Activated B cell treated with CpG ODN at 0.5 μM for 24 hours (primary cell): ENCODE measurements at regions of chr1 and their contacts with region 1.

Region 1: GRCh38 chr1:234610348-234611152 is 572 bp upstream of the IRF2BP2 start:
- DNase-seq: peak; percentile 84
- ATAC-seq: peak; percentile 45
- H3K4me3 Mint-ChIP-seq: peak overlapping the region; percentile 90
- H3K27ac Mint-ChIP-seq: peak overlapping the region; percentile 95
- H3K4me1 Mint-ChIP-seq: peaks cover 56% of the 10 kb centered on the region
- H3K27me3 Mint-ChIP-seq: no peaks in the 10 kb centered on the region
- CTCF ChIP-seq: no peak

Region 2: DNA sequence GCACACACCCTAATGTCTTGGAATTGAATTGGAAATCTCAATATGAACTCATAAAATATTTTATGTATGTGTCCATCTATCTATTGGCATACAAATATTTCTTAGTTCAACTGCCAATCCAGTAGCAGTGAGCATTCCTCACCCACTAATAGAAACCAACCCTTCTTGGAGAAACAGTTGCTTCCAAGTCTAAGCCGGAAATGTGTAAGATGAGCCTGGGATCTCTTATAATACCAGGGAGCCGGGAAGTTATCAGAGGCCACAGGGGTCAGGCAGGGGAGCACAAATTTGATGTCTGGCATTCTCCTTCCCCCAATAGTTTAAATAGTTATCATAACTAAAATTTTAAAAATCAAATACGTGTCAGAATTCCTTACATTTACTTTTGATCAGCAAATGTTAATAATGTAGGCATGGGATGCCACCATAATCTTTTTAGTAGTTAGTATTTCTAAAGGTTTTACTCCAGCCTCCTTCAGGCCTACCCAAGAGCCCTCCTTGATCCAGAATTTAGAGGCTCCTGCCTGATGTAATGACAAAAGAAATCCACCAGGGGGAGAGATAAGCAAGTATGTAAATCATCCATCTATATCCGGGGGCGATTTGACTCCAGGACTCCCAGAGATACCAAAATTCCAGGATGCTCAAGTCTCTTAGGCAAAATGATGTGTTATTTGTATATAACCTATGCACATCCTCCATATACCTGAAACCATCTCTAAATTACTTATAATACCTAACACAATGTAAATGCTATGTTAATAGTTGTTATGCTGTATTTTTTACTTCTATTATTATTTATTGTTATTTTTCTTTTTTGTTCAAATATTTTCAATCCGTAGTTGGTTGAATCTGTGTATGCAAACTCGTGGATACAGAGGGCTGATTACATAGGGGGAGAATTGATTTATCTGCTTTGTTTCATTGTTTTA is 456.0 kb before region 1 on chr1:
- CTCF ChIA-PET with region 1: no interaction called
- POLR2A ChIA-PET with region 1: no interaction called
- intact Hi-C with region 1: no loop called
- DNase-seq: no peak
- ATAC-seq: no peak
- H3K4me3 Mint-ChIP-seq: no peak overlapping the region
- H3K27ac Mint-ChIP-seq: no peak overlapping the region
- H3K4me1 Mint-ChIP-seq: no peaks in the 10 kb centered on the region
- H3K27me3 Mint-ChIP-seq: peaks cover 2% of the 10 kb centered on the region
- CTCF ChIP-seq: no peak

Region 3: GRCh38 chr1:234533975-234534876 is 76.3 kb before region 1 on chr1:
- CTCF ChIA-PET with region 1: no interaction called
- POLR2A ChIA-PET with region 1: no interaction called
- intact Hi-C with region 1: no loop called
- DNase-seq: no peak
- ATAC-seq: no peak
- H3K4me3 Mint-ChIP-seq: no peak overlapping the region
- H3K27ac Mint-ChIP-seq: no peak overlapping the region
- H3K4me1 Mint-ChIP-seq: peaks cover 6% of the 10 kb centered on the region
- H3K27me3 Mint-ChIP-seq: peaks cover under 1% of the 10 kb centered on the region
- CTCF ChIP-seq: no peak

Region 4: DNA sequence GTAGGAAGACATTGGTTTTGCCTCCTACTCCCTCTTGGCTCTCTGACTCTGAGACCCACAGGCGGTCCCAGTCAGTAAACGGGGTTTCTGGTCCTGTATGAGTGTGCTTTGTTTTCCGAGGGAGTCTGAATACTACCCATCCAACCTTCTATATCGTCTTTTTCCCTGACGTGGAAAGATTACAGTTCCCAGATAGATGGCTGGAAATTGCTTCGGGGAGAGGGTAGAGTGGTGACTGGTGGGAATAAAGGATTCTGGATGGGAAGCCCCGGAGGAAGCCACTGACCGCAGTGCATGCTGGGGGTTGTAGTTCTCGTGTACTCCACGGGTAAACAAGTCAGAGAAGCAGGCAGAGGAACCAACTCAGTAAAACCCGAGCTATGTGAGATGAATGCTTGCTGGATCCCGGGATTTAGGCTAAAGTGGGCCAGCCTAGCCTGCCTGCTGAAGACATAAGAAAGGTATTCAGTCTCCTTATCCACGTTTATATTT is 65.6 kb after region 1 on chr1:
- CTCF ChIA-PET with region 1: no interaction called
- POLR2A ChIA-PET with region 1: interaction called, 4 read pairs
- intact Hi-C with region 1: loop called (anchors 2 kb)
- DNase-seq: peak; percentile 41
- ATAC-seq: peak; percentile 92
- H3K4me3 Mint-ChIP-seq: peak overlapping the region; percentile 87
- H3K27ac Mint-ChIP-seq: peak overlapping the region; percentile 54
- H3K4me1 Mint-ChIP-seq: peaks cover 14% of the 10 kb centered on the region
- H3K27me3 Mint-ChIP-seq: no peaks in the 10 kb centered on the region
- CTCF ChIP-seq: no peak

Region 5: GRCh38 chr1:234842726-234843641 is 232.4 kb after region 1 on chr1:
- CTCF ChIA-PET with region 1: no interaction called
- POLR2A ChIA-PET with region 1: interaction called, 42 read pairs
- intact Hi-C with region 1: loop called (anchors 2 kb)
- DNase-seq: peak; percentile 40
- ATAC-seq: peak; percentile 76
- H3K4me3 Mint-ChIP-seq: peak overlapping the region; percentile 62
- H3K27ac Mint-ChIP-seq: peak overlapping the region; percentile 71
- H3K4me1 Mint-ChIP-seq: peaks cover 52% of the 10 kb centered on the region
- H3K27me3 Mint-ChIP-seq: no peaks in the 10 kb centered on the region
- CTCF ChIP-seq: no peak

Region 6: DNA sequence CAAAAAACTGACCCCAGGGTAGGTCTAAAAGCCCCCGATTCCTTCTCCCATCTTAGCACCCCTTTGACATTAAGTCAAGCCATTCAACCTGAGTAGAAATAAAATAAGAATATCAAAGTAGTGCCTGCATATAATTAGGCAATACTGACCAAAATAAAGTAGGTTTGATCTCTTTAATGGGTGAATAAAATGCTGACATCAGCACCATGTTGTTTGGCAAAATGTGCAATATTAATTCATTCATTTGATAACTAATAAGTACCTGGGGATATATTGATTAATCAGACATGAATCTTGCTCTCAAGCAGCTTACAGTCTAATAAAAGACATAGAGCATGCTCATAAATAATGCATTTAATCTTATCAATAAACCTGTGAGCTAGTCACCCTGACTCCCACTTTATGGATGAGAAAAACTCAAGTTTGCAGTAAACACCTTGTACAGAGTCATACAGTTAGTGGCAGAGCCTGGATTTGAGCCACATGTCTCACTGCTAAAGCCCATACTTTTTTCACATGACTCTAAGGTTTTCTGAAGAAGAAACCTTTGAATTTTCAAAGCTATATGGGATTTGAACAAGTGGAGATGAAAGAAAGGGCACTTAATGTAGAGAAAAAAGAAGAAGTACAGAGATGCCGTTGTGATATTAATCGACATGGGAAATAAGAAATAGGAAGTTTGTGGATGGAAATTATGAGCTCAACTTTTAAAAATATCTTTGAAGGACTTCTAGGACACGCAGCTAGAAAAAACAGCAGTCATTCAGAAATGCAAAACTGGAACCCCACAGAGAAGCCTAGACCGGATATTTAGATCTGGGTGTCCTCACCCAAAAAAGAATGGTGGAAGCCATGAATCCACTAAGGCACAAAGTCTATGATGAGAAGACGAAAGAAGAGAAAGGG is 334.1 kb after region 1 on chr1:
- CTCF ChIA-PET with region 1: no interaction called
- POLR2A ChIA-PET with region 1: interaction called, 17 read pairs
- intact Hi-C with region 1: no loop called
- DNase-seq: no peak
- ATAC-seq: peak; percentile 50
- H3K4me3 Mint-ChIP-seq: peak overlapping the region; percentile 58
- H3K27ac Mint-ChIP-seq: peak overlapping the region; percentile 81
- H3K4me1 Mint-ChIP-seq: peaks cover 39% of the 10 kb centered on the region
- H3K27me3 Mint-ChIP-seq: no peaks in the 10 kb centered on the region
- CTCF ChIP-seq: no peak

Region 7: DNA sequence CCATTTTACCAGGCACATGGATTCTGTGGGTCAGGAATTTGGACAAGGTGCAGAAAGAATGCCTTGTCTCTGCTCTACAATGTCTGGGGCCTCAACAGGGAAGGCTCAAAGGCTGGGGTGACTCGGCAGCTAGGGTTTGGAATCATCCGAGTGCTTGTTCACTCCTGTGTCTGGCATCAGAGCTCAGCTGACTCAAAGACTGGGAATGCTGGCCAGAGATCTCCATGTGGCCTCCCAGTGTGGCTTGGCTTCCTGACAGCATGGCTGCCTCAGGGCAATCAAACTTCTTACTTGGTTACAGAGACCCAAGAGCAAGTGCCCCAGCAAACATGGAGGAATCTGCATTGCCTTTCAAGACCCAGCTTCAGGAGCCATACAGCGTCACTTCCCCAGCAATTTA is 407.6 kb after region 1 on chr1:
- CTCF ChIA-PET with region 1: interaction called, 3 read pairs
- POLR2A ChIA-PET with region 1: interaction called, 142 read pairs
- intact Hi-C with region 1: no loop called
- DNase-seq: no peak
- ATAC-seq: no peak
- H3K4me3 Mint-ChIP-seq: no peak overlapping the region
- H3K27ac Mint-ChIP-seq: peak overlapping the region; percentile 68
- H3K4me1 Mint-ChIP-seq: peaks cover 72% of the 10 kb centered on the region
- H3K27me3 Mint-ChIP-seq: no peaks in the 10 kb centered on the region
- CTCF ChIP-seq: no peak

Region 8: GRCh38 chr1:235030919-235031596 is 420.5 kb after region 1 on chr1:
- CTCF ChIA-PET with region 1: no interaction called
- POLR2A ChIA-PET with region 1: no interaction called
- intact Hi-C with region 1: no loop called
- DNase-seq: no peak
- ATAC-seq: no peak
- H3K4me3 Mint-ChIP-seq: no peak overlapping the region
- H3K27ac Mint-ChIP-seq: no peak overlapping the region
- H3K4me1 Mint-ChIP-seq: peaks cover 16% of the 10 kb centered on the region
- H3K27me3 Mint-ChIP-seq: no peaks in the 10 kb centered on the region
- CTCF ChIP-seq: no peak

Region 9: GRCh38 chr1:235160957-235161684 is 550.6 kb after region 1 on chr1 and contains the start of gene RBM34:
- CTCF ChIA-PET with region 1: no interaction called
- POLR2A ChIA-PET with region 1: interaction called, 11 read pairs
- intact Hi-C with region 1: no loop called
- DNase-seq: peak; percentile 90
- ATAC-seq: peak; percentile 94
- H3K4me3 Mint-ChIP-seq: peak within 1 kb of the TSS; percentile 96
- H3K27ac Mint-ChIP-seq: peak within 1 kb of the TSS; percentile 99
- H3K4me1 Mint-ChIP-seq: peaks cover 21% of the 10 kb centered on the region
- H3K27me3 Mint-ChIP-seq: no peaks in the 10 kb centered on the region
- CTCF ChIP-seq: no peak
- total RNA-seq, gene RBM34: 122 and 128 TPM in 2 replicates